Activated B cell treated with CpG ODN at 0.5 μM for 24 hours (primary cell): ENCODE measurements at regions of chr3 and their contacts with region 1.

Region 1: DNA sequence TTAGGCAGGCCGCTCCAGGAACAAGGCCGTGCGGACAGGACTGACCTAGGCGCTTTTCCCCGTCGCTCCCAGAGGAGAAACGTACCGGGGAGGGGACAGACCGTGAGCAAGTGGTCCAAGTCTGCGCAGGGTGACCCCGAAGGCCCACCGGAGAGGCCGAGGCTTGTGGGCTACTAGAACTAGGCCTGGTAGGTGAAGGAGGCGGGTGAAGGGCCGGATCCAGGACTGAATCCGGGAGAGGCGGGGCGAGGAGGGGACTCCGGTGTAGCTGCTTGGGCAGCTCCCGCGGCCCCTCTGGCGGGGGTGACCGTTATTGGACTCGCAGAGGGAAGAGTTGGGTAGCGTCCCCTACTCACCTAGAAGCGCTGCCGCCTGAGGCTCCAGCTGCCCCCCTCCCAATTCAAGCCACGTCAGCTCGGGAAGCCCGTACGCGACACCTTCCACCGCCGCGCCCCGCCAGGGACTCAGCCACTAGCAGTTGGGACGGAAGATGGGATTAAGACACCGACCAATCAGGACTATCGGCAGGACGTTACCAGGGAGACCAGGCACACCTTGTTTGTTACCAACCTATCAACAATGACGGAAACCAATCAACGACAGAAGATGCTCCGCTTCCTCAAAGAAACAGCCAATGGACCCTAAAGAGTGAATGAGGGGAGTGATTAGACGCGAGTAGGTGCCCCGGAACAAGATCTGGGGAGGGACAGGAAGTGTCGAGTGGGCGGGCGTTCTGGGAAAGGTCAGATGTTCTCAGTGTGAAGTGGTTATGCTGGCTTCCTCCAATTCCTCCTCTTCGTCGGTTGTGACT is at the start of gene GOLGB1:
- DNase-seq: peak; percentile 81
- ATAC-seq: peak; percentile 93
- H3K4me3 Mint-ChIP-seq: no peak within 1 kb of the TSS
- H3K27ac Mint-ChIP-seq: no peak within 1 kb of the TSS
- H3K4me1 Mint-ChIP-seq: peaks cover 4% of the 10 kb centered on the region
- H3K27me3 Mint-ChIP-seq: no peaks in the 10 kb centered on the region
- CTCF ChIP-seq: no peak
- total RNA-seq, gene GOLGB1: 37.3 and 44.7 TPM in 2 replicates

Region 2: DNA sequence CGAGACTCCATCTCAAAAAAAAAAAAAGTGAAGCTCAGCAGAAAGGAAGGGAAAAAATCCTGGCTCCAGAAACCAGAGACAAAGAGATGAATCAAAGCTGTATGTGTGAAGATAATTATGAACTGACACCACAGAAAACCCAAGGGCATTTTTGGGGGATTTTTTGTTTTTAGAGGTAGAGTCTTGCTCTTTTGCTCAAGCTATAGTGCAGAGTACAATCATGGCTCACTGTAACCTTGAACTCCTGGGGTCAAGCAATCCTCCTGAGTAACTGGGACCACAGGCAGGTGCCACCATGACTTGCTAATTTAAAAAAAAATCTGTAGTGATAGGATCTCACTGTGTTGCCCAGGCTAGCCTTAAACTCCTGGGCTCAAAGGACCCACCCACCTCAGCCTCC is 111.6 kb before region 1 on chr3:
- CTCF ChIA-PET with region 1: no interaction called
- POLR2A ChIA-PET with region 1: no interaction called
- intact Hi-C with region 1: no loop called
- DNase-seq: no peak
- ATAC-seq: peak; percentile 34
- H3K4me3 Mint-ChIP-seq: no peak overlapping the region
- H3K27ac Mint-ChIP-seq: peak overlapping the region; percentile 56
- H3K4me1 Mint-ChIP-seq: peaks cover 12% of the 10 kb centered on the region
- H3K27me3 Mint-ChIP-seq: no peaks in the 10 kb centered on the region
- CTCF ChIP-seq: no peak

Region 3: DNA sequence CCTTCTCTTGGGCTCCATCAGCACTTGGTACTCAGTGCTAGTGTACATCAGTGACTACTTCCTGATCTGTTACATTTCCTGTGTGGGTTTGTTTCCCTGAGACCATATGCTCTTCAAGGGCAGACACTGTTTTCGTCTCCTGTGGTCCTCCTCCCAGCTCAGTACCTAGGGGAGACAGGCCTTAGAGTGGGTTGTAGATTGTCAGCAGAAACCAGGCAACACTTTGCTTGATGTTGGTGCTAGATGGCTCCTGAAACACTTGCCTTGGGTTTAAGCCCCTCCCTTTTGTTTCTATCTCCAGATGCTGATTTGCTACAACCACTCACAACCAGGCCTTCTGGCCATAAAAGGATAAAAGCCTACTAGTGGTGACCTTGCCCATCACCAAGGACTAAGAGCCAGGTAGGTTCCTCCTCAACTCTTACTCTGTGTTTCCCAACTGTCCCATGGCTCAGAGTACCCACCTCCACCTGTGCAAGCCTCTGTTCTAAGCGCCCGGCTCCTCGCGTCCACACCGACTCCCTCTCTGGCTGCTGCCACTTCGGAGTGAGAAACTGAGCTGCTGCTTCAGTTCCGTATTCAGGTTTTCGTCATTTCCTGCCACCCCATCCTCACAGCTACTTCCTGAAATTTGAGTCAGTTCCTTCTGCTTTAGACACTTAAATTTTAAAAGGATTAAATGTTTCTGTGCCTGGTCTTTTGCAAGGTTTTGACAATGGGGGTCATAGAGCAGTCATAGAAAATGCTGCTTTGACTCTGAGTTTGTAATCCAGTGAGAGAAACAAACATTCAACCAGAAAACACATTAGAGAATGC is 88.9 kb before region 1 on chr3 and contains the start of gene HCLS1:
- CTCF ChIA-PET with region 1: no interaction called
- POLR2A ChIA-PET with region 1: interaction called, 9 read pairs
- intact Hi-C with region 1: loop called (anchors 1 kb)
- DNase-seq: peak; percentile 73
- ATAC-seq: peak; percentile 85
- H3K4me3 Mint-ChIP-seq: peak within 1 kb of the TSS; percentile 90
- H3K27ac Mint-ChIP-seq: peak within 1 kb of the TSS; percentile 96
- H3K4me1 Mint-ChIP-seq: peaks cover 55% of the 10 kb centered on the region
- H3K27me3 Mint-ChIP-seq: no peaks in the 10 kb centered on the region
- CTCF ChIP-seq: no peak
- total RNA-seq, gene HCLS1: 434 and 440 TPM in 2 replicates

Region 4: GRCh38 chr3:121809249-121809648 is 59.8 kb after region 1 on chr3:
- CTCF ChIA-PET with region 1: no interaction called
- POLR2A ChIA-PET with region 1: interaction called, 5 read pairs
- intact Hi-C with region 1: loop called (anchors 2 kb)
- DNase-seq: no peak
- ATAC-seq: peak; percentile 89
- H3K4me3 Mint-ChIP-seq: peak overlapping the region; percentile 72
- H3K27ac Mint-ChIP-seq: peak overlapping the region; percentile 89
- H3K4me1 Mint-ChIP-seq: peaks cover 81% of the 10 kb centered on the region
- H3K27me3 Mint-ChIP-seq: no peaks in the 10 kb centered on the region
- CTCF ChIP-seq: no peak

Region 5: DNA sequence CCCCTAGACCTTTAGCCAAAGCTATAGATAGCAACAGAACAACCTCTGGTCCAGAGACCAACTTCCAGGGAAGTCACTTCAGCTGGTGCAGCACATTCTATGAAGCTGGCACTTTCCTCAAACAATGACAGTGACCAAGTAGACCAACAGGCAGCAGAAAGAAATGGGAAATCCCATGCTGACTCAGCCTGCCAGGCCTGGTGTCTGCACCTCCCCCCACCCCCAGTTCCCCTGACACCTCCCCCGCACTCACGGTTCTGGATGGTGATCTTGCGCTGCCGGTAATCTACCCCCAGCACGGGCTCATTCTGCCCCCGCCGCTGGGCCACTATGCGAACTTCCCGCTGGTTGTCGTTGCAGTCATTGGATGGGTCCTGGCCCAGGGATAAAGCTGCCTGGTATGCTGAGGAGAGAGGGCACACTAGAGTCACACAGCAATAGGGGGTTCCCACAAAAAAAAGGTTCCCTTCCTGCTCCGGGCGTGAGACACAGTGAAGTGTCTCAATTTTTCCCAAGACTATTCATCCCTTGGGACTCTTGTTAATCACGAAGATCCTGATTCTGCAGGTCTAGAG is 255.6 kb after region 1 on chr3:
- CTCF ChIA-PET with region 1: no interaction called
- POLR2A ChIA-PET with region 1: no interaction called
- intact Hi-C with region 1: loop called (anchors 5 kb)
- DNase-seq: peak; percentile 49
- ATAC-seq: peak; percentile 76
- H3K4me3 Mint-ChIP-seq: peak overlapping the region; percentile 76
- H3K27ac Mint-ChIP-seq: peak overlapping the region; percentile 91
- H3K4me1 Mint-ChIP-seq: peaks cover 65% of the 10 kb centered on the region
- H3K27me3 Mint-ChIP-seq: no peaks in the 10 kb centered on the region
- CTCF ChIP-seq: no peak

Region 6: GRCh38 chr3:122383771-122384697 is 634.6 kb after region 1 on chr3 and contains the start of gene FAM162A:
- CTCF ChIA-PET with region 1: no interaction called
- POLR2A ChIA-PET with region 1: interaction called, 3 read pairs
- intact Hi-C with region 1: loop called (anchors 2 kb)
- DNase-seq: peak; percentile 93
- ATAC-seq: peak; percentile 94
- H3K4me3 Mint-ChIP-seq: peak within 1 kb of the TSS; percentile 94
- H3K27ac Mint-ChIP-seq: peak within 1 kb of the TSS; percentile 91
- H3K4me1 Mint-ChIP-seq: peaks cover 38% of the 10 kb centered on the region
- H3K27me3 Mint-ChIP-seq: no peaks in the 10 kb centered on the region
- CTCF ChIP-seq: no peak
- total RNA-seq, gene FAM162A: 28.5 and 33.9 TPM in 2 replicates